Endothelial cell of umbilical vein (primary cell): ENCODE measurements at regions of chr11 and their contacts with region 1.

Region 1: DNA sequence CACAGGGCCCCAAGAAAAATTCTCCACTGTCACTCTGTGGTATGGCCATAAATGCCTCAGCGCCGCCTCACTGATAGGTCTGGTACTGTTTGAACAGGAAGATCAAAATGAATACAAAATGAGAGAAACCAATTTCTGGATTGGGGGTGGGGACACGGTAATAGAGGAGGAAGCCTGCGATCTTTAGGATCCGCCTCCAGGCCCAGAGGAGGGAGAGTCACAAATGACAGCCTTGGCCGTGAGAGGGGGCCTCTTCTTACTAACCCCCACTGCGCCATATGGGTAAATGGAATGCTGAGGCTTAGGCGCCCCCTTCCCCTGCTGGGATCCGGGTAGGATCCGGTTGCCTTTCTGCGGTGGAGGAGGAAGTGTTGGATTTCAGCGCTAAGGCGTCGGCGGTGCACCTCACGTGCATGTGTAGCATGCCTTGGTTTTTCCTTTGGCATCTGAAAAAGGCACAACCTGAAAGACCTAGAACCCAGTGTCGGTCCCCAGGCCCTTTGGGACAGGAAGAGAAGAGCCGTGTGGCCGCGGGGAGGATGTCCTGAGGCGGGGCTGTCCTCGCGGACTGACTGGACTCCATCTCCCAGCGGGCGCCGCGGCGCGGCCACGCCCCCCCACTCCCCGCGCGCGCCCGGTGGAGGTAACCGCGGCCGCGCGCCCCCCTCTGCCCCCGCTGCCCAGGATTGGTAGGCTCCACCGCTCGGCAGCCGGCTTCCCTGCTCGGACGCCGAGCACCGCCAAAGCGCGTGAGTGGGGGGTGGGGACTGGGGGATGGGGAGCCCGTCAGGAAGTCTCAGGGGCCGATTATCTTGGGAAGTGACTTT is 718 bp upstream of the MADD start:
- DNase-seq: peak; percentile 85
- H3K4me3 ChIP-seq: peak overlapping the region; percentile 66 to 93 (median 70)
- H3K27ac ChIP-seq: peak overlapping the region; percentile 76
- H3K4me1 ChIP-seq: peaks cover 37% of the 10 kb centered on the region
- H3K27me3 ChIP-seq: no peaks in the 10 kb centered on the region
- CTCF ChIP-seq: no peak
- POLR2A ChIP-seq: peak; percentile 8

Region 2: GRCh38 chr11:47071791-47072261 is 197.4 kb before region 1 on chr11:
- CTCF ChIA-PET with region 1: no interaction called
- POLR2A ChIA-PET with region 1: no interaction called
- dilution Hi-C with region 1: no loop called
- intact Hi-C with region 1: no loop called
- DNase-seq: no peak
- H3K4me3 ChIP-seq: no peak overlapping the region
- H3K27ac ChIP-seq: no peak overlapping the region
- H3K4me1 ChIP-seq: peaks cover 6% of the 10 kb centered on the region
- H3K27me3 ChIP-seq: no peaks in the 10 kb centered on the region
- CTCF ChIP-seq: no peak
- POLR2A ChIP-seq: no peak

Region 3: GRCh38 chr11:47143322-47143721 is 125.9 kb before region 1 on chr11:
- CTCF ChIA-PET with region 1: no interaction called
- POLR2A ChIA-PET with region 1: no interaction called
- dilution Hi-C with region 1: no loop called
- intact Hi-C with region 1: no loop called
- DNase-seq: peak; percentile 56
- H3K4me3 ChIP-seq: no peak overlapping the region
- H3K27ac ChIP-seq: no peak overlapping the region
- H3K4me1 ChIP-seq: no peaks in the 10 kb centered on the region
- H3K27me3 ChIP-seq: no peaks in the 10 kb centered on the region
- CTCF ChIP-seq: no peak
- POLR2A ChIP-seq: no peak

Region 4: GRCh38 chr11:47233989-47234668 is 35.1 kb before region 1 on chr11:
- CTCF ChIA-PET with region 1: interaction called, 24 read pairs
- POLR2A ChIA-PET with region 1: no interaction called
- dilution Hi-C with region 1: no loop called
- intact Hi-C with region 1: no loop called
- DNase-seq: peak; percentile 29
- H3K4me3 ChIP-seq: no peak overlapping the region
- H3K27ac ChIP-seq: no peak overlapping the region
- H3K4me1 ChIP-seq: peaks cover 15% of the 10 kb centered on the region
- H3K27me3 ChIP-seq: no peaks in the 10 kb centered on the region
- CTCF ChIP-seq: peak in 1 of 2 donors; percentile 27
- POLR2A ChIP-seq: no peak

Region 5: DNA sequence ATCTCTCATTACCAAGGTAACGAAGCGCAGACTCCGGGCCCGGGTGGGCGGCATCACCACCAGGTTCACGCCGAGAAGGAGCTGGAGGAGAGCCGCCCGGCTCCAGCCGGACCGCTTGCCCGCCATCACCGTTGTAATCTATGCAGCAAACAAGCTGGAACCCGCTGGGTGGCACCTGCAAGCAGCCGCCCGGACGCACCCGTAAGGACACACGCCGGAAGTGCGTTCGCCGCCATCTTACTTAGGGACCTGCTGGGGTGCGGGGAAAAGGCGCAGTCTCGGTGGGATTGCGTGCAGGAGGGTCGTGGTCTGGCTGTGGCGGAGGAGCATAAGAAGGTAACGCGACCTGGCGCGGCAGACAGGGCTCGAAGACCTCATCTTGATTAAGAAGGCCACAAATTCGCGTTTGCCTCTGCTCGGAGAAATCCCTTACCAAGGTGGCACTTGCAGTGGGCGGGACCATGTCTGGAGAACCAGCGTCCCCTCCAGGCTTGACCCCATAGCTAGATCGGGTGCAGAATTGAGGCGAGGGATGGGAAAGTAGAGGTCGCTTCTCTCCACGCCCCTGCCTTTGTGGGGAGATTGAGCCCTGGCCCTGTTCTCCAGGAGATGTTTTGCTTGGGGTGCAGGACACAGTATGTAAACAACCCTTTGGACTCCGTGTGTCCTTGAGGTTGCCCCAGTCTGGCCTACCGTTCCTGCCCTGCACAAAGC is 20.4 kb before region 1 on chr11 and contains the start of gene ACP2:
- CTCF ChIA-PET with region 1: interaction called, 5 read pairs
- POLR2A ChIA-PET with region 1: interaction called, 3 read pairs
- dilution Hi-C with region 1: no loop called
- intact Hi-C with region 1: loop called (anchors 1 kb)
- DNase-seq: peak; percentile 88
- H3K4me3 ChIP-seq: peak within 1 kb of the TSS; percentile 50 to 74 (median 68)
- H3K27ac ChIP-seq: peak within 1 kb of the TSS; percentile 49
- H3K4me1 ChIP-seq: peaks cover 13% of the 10 kb centered on the region
- H3K27me3 ChIP-seq: no peaks in the 10 kb centered on the region
- CTCF ChIP-seq: peak; percentile 7 to 34
- POLR2A ChIP-seq: peak; percentile 92
- total RNA-seq, gene ACP2: 35.6 and 39.7 TPM in 2 replicates

Region 6: DNA sequence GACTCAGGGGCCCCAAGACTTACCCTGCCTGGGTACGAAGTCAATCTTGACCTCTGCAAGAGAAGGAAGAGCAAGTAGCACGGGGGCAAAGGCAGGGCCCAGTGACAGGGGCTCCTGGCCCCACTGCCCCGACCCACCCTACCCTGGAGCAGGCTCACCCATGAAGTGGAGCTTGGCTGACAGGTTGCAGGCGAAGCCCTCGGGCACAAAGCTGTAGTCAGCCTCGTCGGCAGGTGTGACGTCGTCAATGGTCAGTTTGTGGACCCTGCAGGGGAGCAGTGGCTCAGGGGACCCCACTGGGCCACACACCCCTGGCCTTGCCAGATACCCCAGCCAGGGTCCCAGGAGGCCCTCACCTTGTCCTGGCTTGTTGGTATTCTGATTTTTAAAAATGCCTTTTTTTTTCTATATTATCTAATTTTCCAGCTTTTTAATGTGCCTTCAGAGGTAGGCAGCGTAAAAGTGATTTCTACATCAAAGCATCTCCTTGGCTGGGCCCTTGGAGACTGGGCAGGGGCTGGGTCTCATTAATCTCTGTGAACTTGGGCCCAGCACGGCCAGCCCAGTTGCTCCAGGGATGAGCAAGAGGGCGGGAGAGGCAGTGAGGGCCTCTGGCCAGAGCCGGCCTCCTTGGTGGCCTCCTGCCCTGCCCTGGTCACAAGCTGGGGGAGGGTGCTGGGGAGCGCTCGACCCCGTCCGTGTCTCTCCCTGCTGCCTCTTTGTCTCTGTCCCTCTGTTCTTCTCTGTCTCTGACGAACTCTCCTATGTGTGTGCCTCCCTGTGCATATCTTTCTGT is 72.0 kb after region 1 on chr11:
- CTCF ChIA-PET with region 1: no interaction called
- POLR2A ChIA-PET with region 1: no interaction called
- dilution Hi-C with region 1: no loop called
- intact Hi-C with region 1: no loop called
- DNase-seq: no peak
- H3K4me3 ChIP-seq: no peak overlapping the region
- H3K27ac ChIP-seq: no peak overlapping the region
- H3K4me1 ChIP-seq: no peaks in the 10 kb centered on the region
- H3K27me3 ChIP-seq: no peaks in the 10 kb centered on the region
- CTCF ChIP-seq: no peak
- POLR2A ChIP-seq: no peak